PC-3 (cell line): ENCODE measurements at regions of chr4 and their contacts with region 1.

Region 1: GRCh38 chr4:176971576-176972115 is 178.9 kb upstream of the VEGFC start:
- DNase-seq: peak; percentile 66
- ATAC-seq: peak; percentile 95
- H3K4me3 ChIP-seq: no peak overlapping the region
- H3K27ac ChIP-seq: peak overlapping the region; percentile 80
- H3K4me1 ChIP-seq: peaks cover 21% of the 10 kb centered on the region
- H3K27me3 ChIP-seq: no peaks in the 10 kb centered on the region
- CTCF ChIP-seq: no peak

Region 2: GRCh38 chr4:176920694-176921093 is 51.0 kb before region 1 on chr4:
- CTCF ChIA-PET with region 1: no interaction called
- POLR2A ChIA-PET with region 1: no interaction called
- intact Hi-C with region 1: no loop called
- DNase-seq: peak; percentile 64
- ATAC-seq: peak; percentile 77
- H3K4me3 ChIP-seq: no peak overlapping the region
- H3K27ac ChIP-seq: peak overlapping the region; percentile 61
- H3K4me1 ChIP-seq: peaks cover 13% of the 10 kb centered on the region
- H3K27me3 ChIP-seq: no peaks in the 10 kb centered on the region
- CTCF ChIP-seq: no peak

Region 3: GRCh38 chr4:177016541-177017141 is 45.0 kb after region 1 on chr4:
- CTCF ChIA-PET with region 1: no interaction called
- POLR2A ChIA-PET with region 1: interaction called, 15 read pairs
- intact Hi-C with region 1: no loop called
- DNase-seq: peak; percentile 14
- ATAC-seq: no peak
- H3K4me3 ChIP-seq: no peak overlapping the region
- H3K27ac ChIP-seq: 0 out of 2 replicates have a peak overlapping the region, but pooled peaks have one; percentile 4
- H3K4me1 ChIP-seq: 0 out of 2 replicates have a peak, but pooled peaks cover 6% of the 10 kb centered on the region
- H3K27me3 ChIP-seq: no peaks in the 10 kb centered on the region
- CTCF ChIP-seq: no peak

Region 4: GRCh38 chr4:177047070-177047850 is 75.6 kb after region 1 on chr4:
- CTCF ChIA-PET with region 1: no interaction called
- POLR2A ChIA-PET with region 1: no interaction called
- intact Hi-C with region 1: loop called (anchors 10 kb)
- DNase-seq: peak; percentile 78
- ATAC-seq: peak; percentile 96
- H3K4me3 ChIP-seq: no peak overlapping the region
- H3K27ac ChIP-seq: peak overlapping the region; percentile 76
- H3K4me1 ChIP-seq: peaks cover 13% of the 10 kb centered on the region
- H3K27me3 ChIP-seq: no peaks in the 10 kb centered on the region
- CTCF ChIP-seq: peak; percentile 84